Esophagus muscularis mucosa (tissue), 4 donors: ENCODE measurements at regions of chr16 and their contacts with region 1.

Region 1: GRCh38 chr16:8878521-8878911 is 3.6 kb upstream of the LITAFD start:
- DNase-seq: no peak
- H3K4me3 ChIP-seq: no peak overlapping the region
- H3K27ac ChIP-seq: no peak overlapping the region
- H3K4me1 ChIP-seq: peaks cover 4 to 6% (median 5%) of the 10 kb centered on the region in 4 donors
- H3K27me3 ChIP-seq: peaks cover 0 to 48% (median 7%) of the 10 kb centered on the region in 4 donors
- CTCF ChIP-seq: no peak
- EP300 ChIP-seq: no peak
- POLR2A ChIP-seq: no peak

Region 2: DNA sequence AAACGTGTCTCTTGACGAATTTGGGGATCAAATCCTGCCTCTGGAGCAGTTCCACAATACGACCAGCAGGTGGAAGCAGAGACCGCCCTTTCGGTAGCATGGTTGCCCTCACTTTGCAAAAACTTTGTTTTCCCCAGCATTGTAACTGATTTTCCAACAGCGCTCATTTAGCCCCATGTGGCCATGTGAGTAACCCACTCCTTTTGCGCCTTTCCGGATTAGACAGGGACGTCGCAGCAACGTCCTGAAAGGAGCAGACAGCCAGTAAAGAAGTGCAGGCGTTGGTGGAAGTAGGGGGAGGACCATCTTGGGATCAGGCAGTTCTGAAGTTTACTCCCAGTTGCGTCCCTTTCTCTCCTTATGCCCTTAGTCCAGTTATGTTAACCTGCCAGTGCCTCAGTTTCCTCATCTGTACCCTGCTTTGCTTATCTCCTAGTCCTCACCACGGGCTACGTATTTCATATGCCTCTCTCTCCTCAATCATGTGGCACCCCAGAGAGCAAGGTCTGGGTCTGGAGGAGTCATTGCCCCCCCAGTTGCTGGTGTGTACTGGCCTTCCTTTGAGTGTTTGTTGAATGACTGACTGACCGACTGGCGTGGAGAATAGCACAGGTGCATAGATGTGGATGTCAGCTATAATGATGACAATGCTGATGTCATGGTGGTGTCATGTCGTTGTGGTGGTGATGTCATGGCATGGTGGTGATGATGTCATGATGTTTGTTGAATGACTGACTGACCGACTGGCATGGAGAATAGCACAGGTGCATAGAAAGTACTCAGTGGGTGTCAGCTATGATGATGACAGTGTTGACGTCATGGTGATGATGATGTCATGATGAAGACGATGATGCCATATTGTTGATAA is 310.5 kb before region 1 on chr16:
- intact Hi-C with region 1: loop called (anchors 2 kb)
- DNase-seq: peak; percentile 93
- H3K4me3 ChIP-seq: no peak overlapping the region
- H3K27ac ChIP-seq: no peak overlapping the region
- H3K4me1 ChIP-seq: peaks cover 6 to 41% (median 35%) of the 10 kb centered on the region in 4 donors
- H3K27me3 ChIP-seq: peaks cover 0 to 17% (median 0%) of the 10 kb centered on the region in 4 donors
- CTCF ChIP-seq: peak; percentile 95 to 98 (median 96)
- EP300 ChIP-seq: no peak
- POLR2A ChIP-seq: no peak

Region 3: GRCh38 chr16:8660841-8661301 is 217.6 kb before region 1 on chr16:
- intact Hi-C with region 1: loop called (anchors 2 kb)
- DNase-seq: no peak
- H3K4me3 ChIP-seq: no peak overlapping the region
- H3K27ac ChIP-seq: no peak overlapping the region
- H3K4me1 ChIP-seq: no peaks in the 10 kb centered on the region
- H3K27me3 ChIP-seq: no peaks in the 10 kb centered on the region
- CTCF ChIP-seq: peak; percentile 44 to 71 (median 66)
- EP300 ChIP-seq: no peak
- POLR2A ChIP-seq: no peak

Region 4: GRCh38 chr16:8674413-8675022 is 204.0 kb before region 1 on chr16 and contains the start of gene ABAT:
- intact Hi-C with region 1: loop called (anchors 5 kb)
- DNase-seq: peak; percentile 97
- H3K4me3 ChIP-seq: peak within 1 kb of the TSS; percentile 65 to 80 (median 71)
- H3K27ac ChIP-seq: peak within 1 kb of the TSS in 3 of 4 donors; percentile 32 to 56 (median 49)
- H3K4me1 ChIP-seq: peaks cover 4 to 23% (median 17%) of the 10 kb centered on the region in 4 donors
- H3K27me3 ChIP-seq: no peaks in the 10 kb centered on the region
- CTCF ChIP-seq: no peak
- EP300 ChIP-seq: no peak
- POLR2A ChIP-seq: no peak
- total RNA-seq, gene ABAT: 9.0 to 16.9 (median 13.4) TPM

Region 5: DNA sequence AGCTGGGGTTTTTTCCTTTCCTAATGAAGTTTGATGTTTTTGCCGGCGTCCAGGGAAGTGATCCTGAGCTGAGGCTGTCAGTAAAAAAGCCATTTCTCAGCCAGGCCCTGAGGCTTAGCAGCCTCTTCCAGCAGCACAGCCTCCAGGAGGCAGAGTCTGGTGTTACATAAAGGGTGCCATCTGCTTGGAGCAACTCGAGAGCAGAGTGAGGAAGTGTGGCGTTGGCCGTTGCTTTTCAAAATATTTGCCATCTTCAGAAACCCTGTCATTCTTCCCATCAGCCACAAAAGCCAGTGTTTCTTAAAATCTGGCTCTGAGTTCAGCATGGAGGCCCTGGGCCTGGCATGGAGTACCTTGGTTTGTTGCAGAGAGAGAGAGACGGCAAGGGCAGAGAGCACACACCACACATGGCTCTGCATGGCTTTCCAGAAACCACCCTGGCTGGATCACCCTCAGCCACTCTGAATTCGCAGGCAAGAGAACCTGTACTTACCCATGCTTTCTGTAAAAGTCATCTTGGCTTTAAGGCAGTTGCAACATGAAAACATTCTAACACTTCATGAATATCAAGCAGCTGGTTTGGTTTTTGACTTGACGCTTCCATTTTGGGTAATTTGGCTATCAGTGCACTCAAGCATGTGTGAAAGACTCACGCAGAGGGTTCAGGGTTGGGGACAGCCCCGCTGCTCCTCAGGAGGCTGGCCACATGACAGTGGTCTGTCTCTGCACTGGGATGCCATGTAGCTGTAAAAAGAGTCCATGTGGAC is 59.8 kb before region 1 on chr16:
- intact Hi-C with region 1: no loop called
- DNase-seq: no peak
- H3K4me3 ChIP-seq: no peak overlapping the region
- H3K27ac ChIP-seq: no peak overlapping the region
- H3K4me1 ChIP-seq: peaks cover 0 to 11% (median 0%) of the 10 kb centered on the region in 4 donors
- H3K27me3 ChIP-seq: no peaks in the 10 kb centered on the region
- CTCF ChIP-seq: no peak
- EP300 ChIP-seq: no peak
- POLR2A ChIP-seq: no peak